ENCODE measurements at regions of chr5 and their contacts with region 1.

Region 1: DNA sequence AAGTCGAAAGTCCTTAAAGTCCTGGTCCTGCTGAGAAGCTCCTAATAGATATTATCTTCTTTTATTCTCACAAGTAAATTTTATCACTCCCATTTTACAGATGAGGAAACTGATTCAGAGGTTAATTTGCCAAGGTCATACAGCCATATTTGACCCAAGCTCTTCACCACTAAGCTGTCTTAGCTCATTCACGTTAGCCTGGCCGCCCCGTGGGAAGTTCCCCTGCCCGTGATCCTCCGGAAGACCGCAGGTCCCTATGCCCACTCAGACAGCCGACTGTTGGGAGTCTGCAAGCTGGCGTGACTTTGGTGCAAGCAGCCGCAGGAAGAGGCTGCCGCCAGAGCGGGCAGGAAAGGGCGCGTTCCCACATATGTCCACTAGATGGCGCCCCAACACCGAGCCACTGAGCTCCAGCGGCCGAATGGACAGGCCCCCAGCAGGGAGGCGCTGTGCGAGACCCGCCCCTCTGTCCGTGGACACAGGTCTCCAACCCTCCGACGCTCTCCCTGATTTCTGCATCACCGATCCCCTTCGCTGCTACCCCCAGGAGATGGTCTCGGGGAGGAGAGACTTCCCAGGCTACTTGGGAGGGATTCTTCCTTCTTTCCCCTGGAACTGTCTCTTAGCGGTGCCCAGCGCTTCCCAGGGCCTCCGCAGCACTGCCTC is 10.0 kb upstream of the ARAP3 start:
- DNase-seq: peak; percentile 59 to 91 (median 78)
- ATAC-seq: peak; percentile 94
- H3K4me3 ChIP-seq: peak overlapping the region; percentile 48
- H3K4me3 Mint-ChIP-seq: peak overlapping the region in 9 of 10 donors; percentile 52 to 83 (median 69)
- H3K27ac ChIP-seq: no peak overlapping the region
- H3K27ac Mint-ChIP-seq: peak overlapping the region in 4 of 9 donors; percentile 2 to 60 (median 48)
- H3K4me1 ChIP-seq: peaks cover 12 to 16% of the 10 kb centered on the region in 2 donors
- H3K4me1 Mint-ChIP-seq: peaks cover 13 to 28% (median 16%) of the 10 kb centered on the region in 7 donors
- H3K27me3 ChIP-seq: no peaks in the 10 kb centered on the region
- H3K27me3 Mint-ChIP-seq: peaks cover 0 to 27% (median 11%) of the 10 kb centered on the region in 5 donors

Region 2: GRCh38 chr5:140639148-140639979 is 1052.6 kb before region 1 on chr5 and contains the start of gene TMCO6:
- CTCF ChIA-PET with region 1: no interaction called
- POLR2A ChIA-PET with region 1: no interaction called
- intact Hi-C with region 1: no loop called
- DNase-seq: peak; percentile 89 to 96 (median 94)
- ATAC-seq: peak; percentile 99
- H3K4me3 ChIP-seq: peak within 1 kb of the TSS; percentile 66
- H3K4me3 Mint-ChIP-seq: peak within 1 kb of the TSS; percentile 86 to 97 (median 93)
- H3K27ac ChIP-seq: peak within 1 kb of the TSS; percentile 79
- H3K27ac Mint-ChIP-seq: peak within 1 kb of the TSS; percentile 87 to 100 (median 93)
- H3K4me1 ChIP-seq: peaks cover 6% of the 10 kb centered on the region in 2 donors
- H3K4me1 Mint-ChIP-seq: peaks cover 21 to 54% (median 40%) of the 10 kb centered on the region in 7 donors
- H3K27me3 ChIP-seq: no peaks in the 10 kb centered on the region
- H3K27me3 Mint-ChIP-seq: no peaks in the 10 kb centered on the region
- total RNA-seq, gene TMCO6: 24.5 to 55.3 (median 36.4) TPM

Region 3: GRCh38 chr5:141564216-141564692 is 127.7 kb before region 1 on chr5:
- CTCF ChIA-PET with region 1: no interaction called
- POLR2A ChIA-PET with region 1: no interaction called
- intact Hi-C with region 1: no loop called
- DNase-seq: peak; percentile 17 to 89 (median 80)
- ATAC-seq: peak; percentile 100
- H3K4me3 ChIP-seq: no peak overlapping the region
- H3K4me3 Mint-ChIP-seq: peak overlapping the region in 1 of 10 donors; percentile 8
- H3K27ac ChIP-seq: peak overlapping the region; percentile 43
- H3K27ac Mint-ChIP-seq: peak overlapping the region; percentile 41 to 93 (median 72)
- H3K4me1 ChIP-seq: peaks cover 0 to 8% of the 10 kb centered on the region in 2 donors
- H3K4me1 Mint-ChIP-seq: peaks cover 13 to 51% (median 38%) of the 10 kb centered on the region in 7 donors
- H3K27me3 ChIP-seq: no peaks in the 10 kb centered on the region
- H3K27me3 Mint-ChIP-seq: no peaks in the 10 kb centered on the region

Region 4: DNA sequence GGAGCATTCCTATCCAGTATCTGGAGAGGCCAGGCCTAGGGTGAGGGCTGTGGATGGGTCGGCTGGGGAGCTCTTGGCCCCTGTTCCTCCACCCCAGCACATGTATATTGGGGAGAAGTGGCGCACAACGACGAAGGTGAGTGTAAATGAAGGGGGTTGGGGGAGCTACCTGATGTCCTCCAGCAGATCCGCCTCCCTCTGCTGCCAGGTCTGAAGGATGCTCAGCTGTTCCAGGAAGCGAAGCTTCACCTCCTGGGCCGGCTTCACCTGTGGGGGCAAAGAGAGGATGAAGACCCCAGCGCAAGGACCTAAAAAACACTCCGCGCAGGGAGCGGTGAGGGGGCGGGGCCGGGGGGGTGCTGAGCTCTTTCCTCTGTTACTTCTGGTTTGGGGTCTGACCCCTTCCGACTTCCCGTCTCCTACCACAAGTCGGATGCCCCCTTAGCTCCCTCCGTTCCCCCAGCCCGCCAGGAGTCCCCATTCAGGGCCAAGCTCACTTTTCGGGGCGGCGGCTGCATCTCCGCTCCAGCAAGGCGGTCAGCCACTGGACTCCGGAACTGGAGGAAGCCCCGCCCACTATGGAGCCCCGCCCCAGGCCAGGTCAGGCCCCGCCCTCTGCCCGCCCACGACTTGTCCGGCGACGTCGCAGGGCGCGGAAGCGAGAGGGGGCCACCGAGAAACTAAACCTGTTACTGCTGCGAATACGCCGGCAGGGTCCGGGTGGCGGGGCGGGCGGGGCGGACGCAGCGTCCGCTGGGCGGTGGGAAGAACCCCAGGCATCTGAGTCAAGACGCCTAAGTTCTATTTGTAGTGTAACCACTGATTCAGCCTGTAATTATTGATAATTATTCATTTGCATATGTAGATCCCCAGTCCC is 40.9 kb before region 1 on chr5 and contains the start of gene FCHSD1:
- CTCF ChIA-PET with region 1: interaction called, 4 read pairs
- POLR2A ChIA-PET with region 1: interaction called, 3 read pairs
- intact Hi-C with region 1: loop called in 1 of 2 experiments (anchors 5 kb)
- DNase-seq: peak; percentile 64 to 88 (median 67)
- ATAC-seq: peak; percentile 98
- H3K4me3 ChIP-seq: peak within 1 kb of the TSS; percentile 62
- H3K4me3 Mint-ChIP-seq: peak within 1 kb of the TSS; percentile 60 to 97 (median 90)
- H3K27ac ChIP-seq: peak within 1 kb of the TSS; percentile 75
- H3K27ac Mint-ChIP-seq: peak within 1 kb of the TSS; percentile 56 to 95 (median 89)
- H3K4me1 ChIP-seq: peaks cover 15 to 19% of the 10 kb centered on the region in 2 donors
- H3K4me1 Mint-ChIP-seq: peaks cover 27 to 51% (median 37%) of the 10 kb centered on the region in 7 donors
- H3K27me3 ChIP-seq: no peaks in the 10 kb centered on the region
- H3K27me3 Mint-ChIP-seq: peaks cover 0 to 4% (median 0%) of the 10 kb centered on the region in 5 donors
- total RNA-seq, gene FCHSD1: 69.6 to 96.1 (median 92.3) TPM

Region 5: GRCh38 chr5:141681695-141682641 is 10.0 kb before region 1 on chr5 and contains the start of gene ARAP3:
- CTCF ChIA-PET with region 1: interaction called, 45 read pairs
- POLR2A ChIA-PET with region 1: interaction called, 23 read pairs
- intact Hi-C with region 1: loop called (anchors 1 kb)
- DNase-seq: peak in 2 of 9 donors; percentile 35 to 64
- ATAC-seq: peak; percentile 84
- H3K4me3 ChIP-seq: peak within 1 kb of the TSS; percentile 64
- H3K4me3 Mint-ChIP-seq: peak within 1 kb of the TSS; percentile 65 to 84 (median 78)
- H3K27ac ChIP-seq: peak within 1 kb of the TSS; percentile 32
- H3K27ac Mint-ChIP-seq: peak within 1 kb of the TSS in 8 of 9 donors; percentile 4 to 77 (median 46)
- H3K4me1 ChIP-seq: peaks cover 14 to 16% of the 10 kb centered on the region in 2 donors
- H3K4me1 Mint-ChIP-seq: peaks cover 15 to 36% (median 27%) of the 10 kb centered on the region in 7 donors
- H3K27me3 ChIP-seq: no peaks in the 10 kb centered on the region
- H3K27me3 Mint-ChIP-seq: no peaks in the 10 kb centered on the region
- total RNA-seq, gene ARAP3: 1.0 to 15.3 (median 9.8) TPM

Region 6: DNA sequence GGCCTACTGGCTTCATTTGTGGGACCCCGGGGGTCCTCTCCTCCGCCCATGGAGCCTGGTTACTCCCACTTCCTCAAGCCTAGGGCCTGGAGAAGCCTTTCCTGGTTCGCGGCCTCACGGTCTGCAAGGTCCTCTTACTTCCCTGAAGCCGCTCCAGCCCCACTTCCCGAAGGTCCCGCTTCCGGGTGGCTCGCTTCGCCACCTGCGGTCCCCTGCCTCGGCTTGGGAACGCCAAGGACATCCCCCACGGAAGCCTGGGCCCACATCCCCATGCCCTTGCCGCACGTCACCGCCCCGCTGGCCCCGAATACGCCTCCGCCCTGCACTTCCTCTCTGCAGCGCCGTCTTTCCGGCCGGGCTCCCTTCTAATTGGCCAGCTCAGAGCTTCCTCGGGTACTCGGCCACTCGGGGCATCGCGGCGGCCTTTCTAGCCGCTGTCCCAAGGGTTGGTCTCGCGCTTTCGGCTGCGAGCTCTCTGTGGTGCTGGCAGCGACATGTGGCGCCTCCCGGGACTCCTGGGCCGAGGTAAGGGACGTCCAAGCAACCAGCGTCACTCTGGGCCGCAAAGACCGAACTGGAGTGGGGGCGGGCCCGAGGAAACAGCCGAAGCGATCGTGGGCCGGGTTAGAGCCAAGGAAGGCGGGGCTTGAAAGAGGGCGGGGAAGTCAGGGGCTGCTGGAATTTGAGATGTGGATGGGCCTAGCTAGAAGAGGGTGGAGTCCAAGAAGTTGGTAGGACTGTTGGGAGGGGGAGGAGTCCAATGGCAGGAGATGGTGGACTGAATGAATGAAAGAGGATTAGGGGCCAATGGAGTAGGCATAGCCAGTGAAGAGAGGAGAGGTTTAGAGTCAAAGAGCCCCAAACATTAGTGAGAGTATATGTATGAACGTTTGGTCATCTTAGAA is 231.7 kb after region 1 on chr5 and contains the start of gene DELE1:
- CTCF ChIA-PET with region 1: interaction called, 3 read pairs
- POLR2A ChIA-PET with region 1: interaction called, 8 read pairs
- intact Hi-C with region 1: loop called in 1 of 2 experiments (anchors 1 kb)
- DNase-seq: peak; percentile 79 to 92 (median 90)
- ATAC-seq: peak; percentile 97
- H3K4me3 ChIP-seq: peak within 1 kb of the TSS; percentile 81
- H3K4me3 Mint-ChIP-seq: peak within 1 kb of the TSS; percentile 88 to 98 (median 94)
- H3K27ac ChIP-seq: peak within 1 kb of the TSS; percentile 98
- H3K27ac Mint-ChIP-seq: peak within 1 kb of the TSS; percentile 87 to 99 (median 98)
- H3K4me1 ChIP-seq: peaks cover 10 to 14% of the 10 kb centered on the region in 2 donors
- H3K4me1 Mint-ChIP-seq: peaks cover 23 to 54% (median 36%) of the 10 kb centered on the region in 7 donors
- H3K27me3 ChIP-seq: no peaks in the 10 kb centered on the region
- H3K27me3 Mint-ChIP-seq: no peaks in the 10 kb centered on the region
- total RNA-seq, gene DELE1: 77.3 to 101 (median 88.2) TPM

Region 7: DNA sequence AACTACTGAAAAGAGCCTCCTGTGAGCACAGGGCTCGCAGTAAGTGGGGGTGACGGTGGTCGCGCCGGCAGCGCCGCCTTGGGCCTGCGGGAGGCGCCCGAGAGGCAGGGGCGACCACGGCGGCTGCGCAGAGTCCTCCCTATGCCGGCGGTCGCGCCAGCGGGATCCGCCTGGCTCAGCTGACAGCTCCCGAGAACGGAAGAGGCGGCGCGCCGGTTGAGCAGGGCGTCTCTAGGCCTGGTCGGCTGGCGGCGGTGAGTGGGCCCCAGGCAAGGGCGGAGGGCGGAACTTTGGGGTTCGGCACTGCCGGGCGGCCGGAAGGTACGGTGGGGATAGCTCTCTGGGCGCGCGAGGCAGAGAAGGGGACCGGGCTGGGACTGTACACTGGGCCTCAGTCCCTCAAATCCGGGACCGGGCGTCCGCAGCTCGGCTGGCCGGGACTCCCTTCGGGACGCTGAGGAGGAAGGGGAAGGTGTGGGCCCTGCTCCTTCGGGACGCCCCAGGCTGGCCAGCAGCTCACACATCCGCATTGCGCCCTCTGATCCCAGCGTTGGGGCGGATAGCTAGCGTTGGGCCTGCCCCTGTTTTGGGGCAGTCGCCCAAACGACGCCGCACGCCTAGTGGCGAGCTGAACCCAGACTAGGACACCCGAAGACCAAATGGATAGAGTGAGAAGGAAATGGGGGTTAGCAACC is 277.1 kb after region 1 on chr5 and contains the start of gene RNF14:
- CTCF ChIA-PET with region 1: interaction called, 7 read pairs
- POLR2A ChIA-PET with region 1: interaction called, 11 read pairs
- intact Hi-C with region 1: loop called (anchors 2 kb)
- DNase-seq: peak; percentile 90 to 96 (median 92)
- ATAC-seq: peak; percentile 97
- H3K4me3 ChIP-seq: peak within 1 kb of the TSS; percentile 69
- H3K4me3 Mint-ChIP-seq: peak within 1 kb of the TSS; percentile 88 to 97 (median 94)
- H3K27ac ChIP-seq: peak within 1 kb of the TSS; percentile 94
- H3K27ac Mint-ChIP-seq: peak within 1 kb of the TSS; percentile 92 to 98 (median 97)
- H3K4me1 ChIP-seq: peaks cover 13 to 18% of the 10 kb centered on the region in 2 donors
- H3K4me1 Mint-ChIP-seq: peaks cover 12 to 47% (median 40%) of the 10 kb centered on the region in 7 donors
- H3K27me3 ChIP-seq: no peaks in the 10 kb centered on the region
- H3K27me3 Mint-ChIP-seq: peaks cover 0 to 2% (median 0%) of the 10 kb centered on the region in 5 donors
- total RNA-seq, gene RNF14: 14.7 to 32.0 (median 24.8) TPM

Region 8: GRCh38 chr5:142012792-142013388 is 320.9 kb after region 1 on chr5 and contains the start of gene GNPDA1:
- CTCF ChIA-PET with region 1: interaction called, 3 read pairs
- POLR2A ChIA-PET with region 1: no interaction called
- intact Hi-C with region 1: loop called (anchors 2 kb)
- DNase-seq: peak; percentile 38 to 81 (median 54)
- ATAC-seq: peak; percentile 87
- H3K4me3 ChIP-seq: peak within 1 kb of the TSS; percentile 68
- H3K4me3 Mint-ChIP-seq: peak within 1 kb of the TSS; percentile 76 to 93 (median 88)
- H3K27ac ChIP-seq: peak within 1 kb of the TSS; percentile 76
- H3K27ac Mint-ChIP-seq: peak within 1 kb of the TSS; percentile 87 to 93 (median 90)
- H3K4me1 ChIP-seq: peaks cover 40 to 53% of the 10 kb centered on the region in 2 donors
- H3K4me1 Mint-ChIP-seq: peaks cover 34 to 86% (median 80%) of the 10 kb centered on the region in 7 donors
- H3K27me3 ChIP-seq: no peaks in the 10 kb centered on the region
- H3K27me3 Mint-ChIP-seq: no peaks in the 10 kb centered on the region
- total RNA-seq, gene GNPDA1: 13.3 to 60.4 (median 26.4) TPM

Region 9: DNA sequence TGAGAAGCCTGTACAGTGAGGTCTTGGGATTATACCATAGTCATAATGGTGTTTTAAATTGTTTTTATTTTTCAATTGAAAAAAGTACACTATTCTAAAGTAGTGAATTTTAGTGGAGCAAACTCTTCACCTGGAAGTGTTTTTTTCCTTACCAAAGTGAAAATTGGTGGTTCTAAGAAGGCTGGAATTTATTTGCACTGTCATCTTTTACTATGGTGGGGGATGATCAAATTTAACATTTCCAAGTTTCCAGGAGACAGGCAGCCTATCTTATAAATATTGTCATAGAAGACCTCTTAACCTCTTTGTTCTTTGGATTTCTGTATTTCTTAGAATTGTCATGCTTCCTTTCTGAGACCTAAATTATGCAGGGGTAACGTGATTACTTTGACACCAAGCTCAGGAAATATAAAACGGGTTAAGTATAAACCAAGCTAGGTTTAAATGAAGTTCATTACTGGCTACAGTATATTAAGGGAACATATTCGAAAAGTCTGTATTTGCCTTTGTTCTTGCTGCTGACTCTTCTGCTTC is 436.7 kb after region 1 on chr5:
- CTCF ChIA-PET with region 1: no interaction called
- POLR2A ChIA-PET with region 1: no interaction called
- intact Hi-C with region 1: no loop called
- DNase-seq: peak in 2 of 9 donors; percentile 46 to 50
- ATAC-seq: peak; percentile 82
- H3K4me3 ChIP-seq: no peak overlapping the region
- H3K4me3 Mint-ChIP-seq: peak overlapping the region; percentile 33 to 78 (median 68)
- H3K27ac ChIP-seq: no peak overlapping the region
- H3K27ac Mint-ChIP-seq: peak overlapping the region in 8 of 9 donors; percentile 51 to 78 (median 67)
- H3K4me1 ChIP-seq: peaks cover 27 to 62% of the 10 kb centered on the region in 2 donors
- H3K4me1 Mint-ChIP-seq: peaks cover 0 to 77% (median 58%) of the 10 kb centered on the region in 7 donors
- H3K27me3 ChIP-seq: no peaks in the 10 kb centered on the region
- H3K27me3 Mint-ChIP-seq: no peaks in the 10 kb centered on the region

Region 10: DNA sequence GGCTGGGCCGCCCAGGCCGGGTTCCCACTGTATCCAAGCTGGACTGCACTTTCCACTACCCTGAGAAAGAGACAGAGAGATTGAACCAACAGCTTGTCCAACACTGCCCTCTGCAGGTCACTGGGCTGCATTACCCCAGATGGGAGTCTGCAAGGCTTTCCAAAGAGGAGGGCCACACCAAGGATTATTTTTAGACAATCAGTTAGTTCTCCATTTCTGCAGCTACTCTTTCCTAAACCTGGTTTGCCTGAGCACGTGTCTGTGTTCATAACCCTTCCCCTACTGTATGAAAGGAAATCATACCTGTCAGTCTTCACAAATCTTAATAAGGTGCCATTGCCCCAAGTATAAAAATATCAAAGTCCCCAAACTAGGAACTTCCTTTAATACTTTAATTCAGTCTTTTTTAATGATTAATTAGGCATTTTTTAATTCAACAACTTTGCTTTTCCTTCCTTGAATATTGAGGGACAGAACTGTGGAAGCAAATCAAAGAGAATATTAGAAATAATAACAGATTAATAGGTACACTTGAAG is 1007.3 kb after region 1 on chr5:
- CTCF ChIA-PET with region 1: interaction called, 3 read pairs
- POLR2A ChIA-PET with region 1: no interaction called
- intact Hi-C with region 1: loop called in 1 of 2 experiments (anchors 1 kb)
- DNase-seq: peak; percentile 53 to 79 (median 68)
- ATAC-seq: peak; percentile 95
- H3K4me3 ChIP-seq: no peak overlapping the region
- H3K4me3 Mint-ChIP-seq: no peak overlapping the region
- H3K27ac ChIP-seq: no peak overlapping the region
- H3K27ac Mint-ChIP-seq: no peak overlapping the region
- H3K4me1 ChIP-seq: no peaks in the 10 kb centered on the region
- H3K4me1 Mint-ChIP-seq: peaks cover 0 to 10% (median 2%) of the 10 kb centered on the region in 7 donors
- H3K27me3 ChIP-seq: no peaks in the 10 kb centered on the region
- H3K27me3 Mint-ChIP-seq: peaks cover 0 to 19% (median 5%) of the 10 kb centered on the region in 5 donors

Measured in naive thymus-derived CD4-positive, alpha-beta T cell (primary cell).